Transverse colon (tissue), 4 donors: ENCODE measurements at regions of chr4 and their contacts with region 1.

Region 1: GRCh38 chr4:14125375-14126129 is 498.0 kb upstream of the BOD1L1 start:
- DNase-seq: no peak
- H3K4me3 ChIP-seq: no peak overlapping the region
- H3K27ac ChIP-seq: no peak overlapping the region
- H3K4me1 ChIP-seq: no peaks in the 10 kb centered on the region
- H3K27me3 ChIP-seq: no peaks in the 10 kb centered on the region
- CTCF ChIP-seq: no peak
- EP300 ChIP-seq: no peak
- POLR2A ChIP-seq: no peak

Region 2: GRCh38 chr4:13430834-13431568 is 694.6 kb before region 1 on chr4:
- in situ Hi-C with region 1: no loop called
- intact Hi-C with region 1: loop called (anchors 10 kb)
- DNase-seq: no peak
- H3K4me3 ChIP-seq: no peak overlapping the region
- H3K27ac ChIP-seq: no peak overlapping the region
- H3K4me1 ChIP-seq: peaks cover 0 to 15% (median 5%) of the 10 kb centered on the region in 4 donors
- H3K27me3 ChIP-seq: no peaks in the 10 kb centered on the region
- CTCF ChIP-seq: peak in 2 of 5 experiments; percentile 12 to 24
- EP300 ChIP-seq: no peak
- POLR2A ChIP-seq: no peak

Region 3: DNA sequence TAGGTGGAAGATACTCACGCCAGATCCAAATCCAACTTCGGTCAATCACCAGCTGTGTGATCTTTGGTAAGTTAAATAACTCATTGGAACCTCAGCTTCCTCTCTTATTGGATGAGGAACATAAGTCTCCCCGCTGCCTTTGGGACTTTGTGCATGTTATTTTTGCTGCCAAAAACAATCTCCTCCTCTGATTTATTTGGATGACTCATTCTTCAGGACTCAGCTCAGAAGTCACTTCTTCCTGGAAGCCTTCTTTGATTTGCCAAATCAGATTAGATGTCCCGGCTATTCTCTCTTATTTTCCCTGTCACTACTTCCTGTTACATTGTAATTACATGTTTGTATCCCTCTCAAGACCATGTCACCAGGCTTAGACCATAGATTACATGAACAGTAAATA is 360.0 kb before region 1 on chr4:
- in situ Hi-C with region 1: no loop called
- intact Hi-C with region 1: no loop called
- DNase-seq: no peak
- H3K4me3 ChIP-seq: no peak overlapping the region
- H3K27ac ChIP-seq: no peak overlapping the region
- H3K4me1 ChIP-seq: no peaks in the 10 kb centered on the region
- H3K27me3 ChIP-seq: no peaks in the 10 kb centered on the region
- CTCF ChIP-seq: no peak
- EP300 ChIP-seq: no peak
- POLR2A ChIP-seq: no peak

Region 4: GRCh38 chr4:14254252-14254651 is 128.7 kb after region 1 on chr4:
- in situ Hi-C with region 1: loop called in 1 of 4 experiments (anchors 10 kb)
- intact Hi-C with region 1: no loop called
- DNase-seq: peak; percentile 25
- H3K4me3 ChIP-seq: no peak overlapping the region
- H3K27ac ChIP-seq: no peak overlapping the region
- H3K4me1 ChIP-seq: no peaks in the 10 kb centered on the region
- H3K27me3 ChIP-seq: no peaks in the 10 kb centered on the region
- CTCF ChIP-seq: peak in 4 of 5 experiments; percentile 23 to 41 (median 37)
- EP300 ChIP-seq: no peak
- POLR2A ChIP-seq: no peak